ENCODE measurements at regions of chr11 and their contacts with region 1.

Region 1: DNA sequence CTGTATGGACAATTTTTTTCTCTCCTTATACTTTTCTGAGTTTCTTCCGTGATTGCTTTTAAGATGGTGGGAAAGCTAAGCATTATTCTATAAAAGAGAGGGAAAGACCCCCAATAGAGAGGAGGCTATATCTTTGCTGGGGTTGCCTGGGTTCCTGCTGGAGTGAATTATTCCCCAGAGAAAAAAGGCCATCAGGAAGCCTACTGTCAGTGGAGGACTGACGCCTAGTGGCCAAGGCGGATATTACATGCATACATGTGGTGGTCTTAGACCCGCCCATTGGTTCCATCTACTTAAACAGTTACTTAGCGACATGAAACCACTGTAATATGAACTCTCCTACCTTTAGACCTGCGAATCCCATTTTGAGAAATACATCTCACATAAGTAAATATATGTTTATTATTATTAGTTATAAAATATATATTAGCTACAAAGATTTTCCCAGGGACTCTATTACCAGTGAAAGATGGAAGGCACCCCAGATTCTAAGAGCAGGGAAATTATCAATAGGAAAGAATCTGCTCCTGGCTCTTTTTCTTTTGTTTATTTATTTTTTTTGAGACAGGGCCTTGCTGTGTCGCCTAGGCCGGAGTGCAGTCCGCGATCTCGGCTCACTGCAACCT is 15.7 kb upstream of the PGA3 start:
- DNase-seq: peak; percentile 66 to 73 (median 71)
- H3K4me3 ChIP-seq: no peak overlapping the region
- H3K4me3 Mint-ChIP-seq: no peak overlapping the region
- H3K27ac ChIP-seq: no peak overlapping the region
- H3K27ac Mint-ChIP-seq: no peak overlapping the region
- H3K4me1 ChIP-seq: no peaks in the 10 kb centered on the region
- H3K4me1 Mint-ChIP-seq: peaks cover 0 to 3% (median 0%) of the 10 kb centered on the region in 4 donors
- H3K27me3 ChIP-seq: no peaks in the 10 kb centered on the region
- H3K27me3 Mint-ChIP-seq: peaks cover 3 to 9% of the 10 kb centered on the region in 2 donors

Region 2: GRCh38 chr11:61176446-61176845 is 11.2 kb before region 1 on chr11:
- CTCF ChIA-PET with region 1: interaction called, 19 read pairs
- POLR2A ChIA-PET with region 1: no interaction called
- intact Hi-C with region 1: no loop called
- DNase-seq: no peak
- H3K4me3 ChIP-seq: no peak overlapping the region
- H3K4me3 Mint-ChIP-seq: no peak overlapping the region
- H3K27ac ChIP-seq: no peak overlapping the region
- H3K27ac Mint-ChIP-seq: no peak overlapping the region
- H3K4me1 ChIP-seq: peaks cover 14% of the 10 kb centered on the region
- H3K4me1 Mint-ChIP-seq: peaks cover 10 to 13% (median 12%) of the 10 kb centered on the region in 4 donors
- H3K27me3 ChIP-seq: no peaks in the 10 kb centered on the region
- H3K27me3 Mint-ChIP-seq: peaks cover 0 to 1% of the 10 kb centered on the region in 2 donors